Testis (tissue), 5 donors: ENCODE measurements at regions of chr1 and their contacts with region 1.

Region 1: GRCh38 chr1:8314346-8315280 is 3.3 kb upstream of the SLC45A1 start:
- DNase-seq: peak; percentile 81
- H3K4me3 ChIP-seq: no peak overlapping the region
- H3K27ac ChIP-seq: no peak overlapping the region
- H3K4me1 ChIP-seq: peaks cover 19% of the 10 kb centered on the region
- H3K27me3 ChIP-seq: no peaks in the 10 kb centered on the region
- CTCF ChIP-seq: peak; percentile 76 to 91 (median 87)
- POLR2A ChIP-seq: no peak

Region 2: DNA sequence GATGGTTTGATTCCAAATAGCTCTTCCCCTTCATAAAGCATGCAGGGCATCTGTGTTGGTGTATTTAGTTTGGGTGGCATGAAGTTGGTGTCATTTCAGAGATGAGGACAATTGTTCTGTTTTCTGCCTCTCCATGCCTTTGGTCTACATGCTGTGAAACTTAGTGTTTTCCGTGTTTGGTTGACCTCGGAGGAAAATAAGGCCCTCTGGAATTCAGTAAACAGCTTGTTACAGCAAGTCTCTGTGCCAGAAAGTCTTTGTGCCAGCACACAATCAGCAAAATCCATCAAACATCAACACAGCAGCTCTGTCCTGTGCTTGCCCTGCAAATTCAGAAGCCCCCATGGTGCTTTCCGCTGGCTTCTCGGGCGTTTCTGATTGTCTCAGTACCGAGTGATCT is 343.6 kb before region 1 on chr1:
- intact Hi-C with region 1: no loop called
- DNase-seq: no peak
- H3K4me3 ChIP-seq: no peak overlapping the region
- H3K27ac ChIP-seq: no peak overlapping the region
- H3K4me1 ChIP-seq: no peaks in the 10 kb centered on the region
- H3K27me3 ChIP-seq: no peaks in the 10 kb centered on the region
- CTCF ChIP-seq: no peak
- POLR2A ChIP-seq: no peak

Region 3: GRCh38 chr1:7989762-7990428 is 324.7 kb before region 1 on chr1:
- intact Hi-C with region 1: loop called (anchors 10 kb)
- DNase-seq: peak; percentile 43
- H3K4me3 ChIP-seq: no peak overlapping the region
- H3K27ac ChIP-seq: peak overlapping the region; percentile 24 to 48
- H3K4me1 ChIP-seq: no peaks in the 10 kb centered on the region
- H3K27me3 ChIP-seq: no peaks in the 10 kb centered on the region
- CTCF ChIP-seq: no peak
- POLR2A ChIP-seq: no peak

Region 4: DNA sequence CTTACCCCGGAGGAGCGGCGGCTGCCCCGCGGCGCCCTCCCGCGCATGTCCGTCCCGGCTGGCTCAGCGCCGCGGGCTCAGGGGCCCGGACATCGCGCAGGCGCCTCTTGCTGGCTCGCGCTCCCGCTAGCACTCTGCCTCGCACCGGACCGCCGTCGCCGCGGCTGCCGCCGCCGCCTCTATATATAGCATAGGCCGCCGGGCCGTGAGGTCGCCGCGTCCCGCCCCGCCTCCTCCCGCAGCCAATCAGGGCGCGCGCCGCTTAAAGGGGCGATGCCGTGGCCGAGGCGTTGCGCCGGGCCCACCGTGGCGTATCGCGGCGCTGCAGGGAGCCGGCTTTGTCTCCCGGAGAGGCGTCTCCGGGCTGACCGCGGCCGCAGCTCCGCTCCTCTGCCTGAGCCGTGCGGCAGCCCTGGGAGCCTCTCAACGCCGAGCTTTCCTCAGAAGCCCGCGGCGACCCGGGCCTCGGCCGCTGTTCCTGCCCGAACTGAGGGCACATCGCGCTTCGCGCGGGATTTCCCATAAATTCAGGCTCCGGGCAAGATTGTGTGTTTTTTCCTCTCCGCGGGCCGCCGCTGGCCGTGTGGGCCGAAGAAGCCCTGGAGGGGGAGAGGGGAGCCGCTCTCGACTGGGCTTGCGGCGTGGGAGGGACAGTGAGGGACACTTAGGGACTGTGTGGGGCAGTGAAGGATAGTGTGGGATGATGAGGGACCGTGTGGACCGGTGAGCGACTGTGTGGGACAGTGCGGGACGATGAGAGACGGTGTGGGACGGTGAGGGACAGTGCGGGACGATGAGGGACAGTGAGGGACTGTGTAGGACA is 288.2 kb before region 1 on chr1 and contains the start of gene ERRFI1:
- intact Hi-C with region 1: loop called (anchors 10 kb)
- DNase-seq: peak; percentile 95
- H3K4me3 ChIP-seq: peak within 1 kb of the TSS; percentile 85 to 91
- H3K27ac ChIP-seq: peak within 1 kb of the TSS; percentile 89 to 91
- H3K4me1 ChIP-seq: peaks cover 29% of the 10 kb centered on the region
- H3K27me3 ChIP-seq: no peaks in the 10 kb centered on the region
- CTCF ChIP-seq: no peak
- POLR2A ChIP-seq: peak; percentile 99
- total RNA-seq, gene ERRFI1: 43.3 to 47.9 TPM

Region 5: GRCh38 chr1:8607906-8608305 is 293.3 kb after region 1 on chr1:
- intact Hi-C with region 1: no loop called
- DNase-seq: no peak
- H3K4me3 ChIP-seq: no peak overlapping the region
- H3K27ac ChIP-seq: no peak overlapping the region
- H3K4me1 ChIP-seq: peaks cover 3% of the 10 kb centered on the region
- H3K27me3 ChIP-seq: no peaks in the 10 kb centered on the region
- CTCF ChIP-seq: no peak
- POLR2A ChIP-seq: no peak